Naive thymus-derived CD4-positive, alpha-beta T cell (primary cell): ENCODE measurements at regions of chr19 and their contacts with region 1.

Region 1: DNA sequence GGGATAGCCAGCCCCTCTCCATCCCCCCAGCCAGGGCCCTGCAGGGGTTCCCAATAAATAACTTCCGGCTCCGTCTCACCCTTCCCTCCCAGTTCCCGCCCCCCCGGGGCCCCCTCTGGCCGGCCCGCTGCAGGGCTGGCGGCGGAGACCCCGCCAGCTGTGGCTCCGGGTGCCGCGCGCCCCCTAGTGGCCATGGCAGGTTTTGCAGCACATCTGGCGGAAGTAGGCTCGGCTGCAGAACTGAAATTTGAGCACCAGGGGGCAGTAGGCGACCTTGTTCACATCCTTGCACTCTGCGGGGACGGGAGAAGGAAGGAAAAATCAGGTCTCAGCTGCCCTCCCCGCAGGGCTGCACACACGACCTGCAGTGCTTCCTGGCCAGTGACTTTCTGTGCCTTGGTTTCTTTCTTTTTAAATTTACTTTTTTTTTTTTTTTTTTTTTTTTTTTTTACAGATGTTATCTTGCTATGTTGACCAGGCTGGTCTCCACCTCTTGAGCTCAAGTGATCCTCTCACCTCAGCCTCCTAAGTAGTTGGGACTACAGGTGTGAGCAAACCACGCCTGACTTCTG is 3.6 kb upstream of the MYO1F start:
- DNase-seq: peak; percentile 73 to 94 (median 83)
- ATAC-seq: peak; percentile 91
- H3K4me3 ChIP-seq: no peak overlapping the region
- H3K4me3 Mint-ChIP-seq: peak overlapping the region in 2 of 10 donors; percentile 23 to 25
- H3K27ac ChIP-seq: no peak overlapping the region
- H3K27ac Mint-ChIP-seq: peak overlapping the region in 2 of 9 donors; percentile 38
- H3K4me1 ChIP-seq: peaks cover 29 to 45% of the 10 kb centered on the region in 2 donors
- H3K4me1 Mint-ChIP-seq: peaks cover 19 to 42% (median 32%) of the 10 kb centered on the region in 7 donors
- H3K27me3 ChIP-seq: no peaks in the 10 kb centered on the region
- H3K27me3 Mint-ChIP-seq: peaks cover 0 to 3% (median 0%) of the 10 kb centered on the region in 5 donors

Region 2: DNA sequence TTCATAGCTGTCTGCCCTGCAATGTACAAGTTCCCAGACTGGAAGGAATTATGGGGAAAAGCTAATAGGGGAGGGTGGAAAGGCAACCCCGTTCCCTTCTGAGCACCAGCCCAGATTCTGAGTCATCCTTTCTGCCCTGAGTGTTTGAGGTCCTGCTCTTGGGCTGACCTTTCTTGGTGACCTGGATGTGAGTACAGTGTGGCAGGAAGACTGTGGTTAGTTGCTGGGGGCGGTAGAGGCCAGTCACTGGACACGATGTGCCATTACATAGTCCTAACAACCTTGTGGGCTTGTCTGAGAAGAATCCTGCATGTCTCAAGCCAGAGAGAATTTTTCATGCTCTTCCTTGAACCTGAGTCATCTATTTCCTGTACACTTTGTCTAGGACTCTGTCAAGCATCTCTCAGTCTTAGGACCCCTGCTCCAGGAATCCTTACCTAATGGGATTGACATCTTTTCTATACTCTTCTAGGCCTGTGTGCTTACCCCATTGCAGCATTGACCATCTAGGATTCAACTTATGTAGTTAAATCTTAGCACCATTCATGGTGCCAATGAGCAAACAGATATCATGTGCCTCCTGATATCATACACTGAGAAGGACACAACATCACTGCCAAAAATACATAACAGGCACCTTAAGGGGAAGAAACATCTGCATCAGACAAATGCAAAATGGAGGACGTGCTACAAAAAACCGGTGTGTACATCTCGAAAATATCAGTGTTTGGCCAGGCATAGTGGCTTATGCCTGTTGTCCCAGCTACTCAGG is 225.0 kb before region 1 on chr19:
- CTCF ChIA-PET with region 1: interaction called, 18 read pairs
- POLR2A ChIA-PET with region 1: no interaction called
- intact Hi-C with region 1: loop called in 1 of 2 experiments (anchors 2 kb)
- DNase-seq: no peak
- ATAC-seq: peak; percentile 72
- H3K4me3 ChIP-seq: no peak overlapping the region
- H3K4me3 Mint-ChIP-seq: no peak overlapping the region
- H3K27ac ChIP-seq: no peak overlapping the region
- H3K27ac Mint-ChIP-seq: no peak overlapping the region
- H3K4me1 ChIP-seq: no peaks in the 10 kb centered on the region
- H3K4me1 Mint-ChIP-seq: peaks cover 0 to 17% (median 3%) of the 10 kb centered on the region in 7 donors
- H3K27me3 ChIP-seq: no peaks in the 10 kb centered on the region
- H3K27me3 Mint-ChIP-seq: peaks cover 1 to 18% (median 14%) of the 10 kb centered on the region in 5 donors

Region 3: GRCh38 chr19:8487137-8487851 is 93.5 kb before region 1 on chr19:
- CTCF ChIA-PET with region 1: interaction called, 84 read pairs
- POLR2A ChIA-PET with region 1: interaction called, 10 read pairs
- intact Hi-C with region 1: loop called in 1 of 2 experiments (anchors 1 kb)
- DNase-seq: peak; percentile 38 to 73 (median 59)
- ATAC-seq: peak; percentile 79
- H3K4me3 ChIP-seq: no peak overlapping the region
- H3K4me3 Mint-ChIP-seq: peak overlapping the region; percentile 33 to 85 (median 68)
- H3K27ac ChIP-seq: peak overlapping the region; percentile 48
- H3K27ac Mint-ChIP-seq: peak overlapping the region; percentile 82 to 95 (median 90)
- H3K4me1 ChIP-seq: peaks cover 15 to 26% of the 10 kb centered on the region in 2 donors
- H3K4me1 Mint-ChIP-seq: peaks cover 29 to 47% (median 34%) of the 10 kb centered on the region in 7 donors
- H3K27me3 ChIP-seq: no peaks in the 10 kb centered on the region
- H3K27me3 Mint-ChIP-seq: no peaks in the 10 kb centered on the region

Region 4: DNA sequence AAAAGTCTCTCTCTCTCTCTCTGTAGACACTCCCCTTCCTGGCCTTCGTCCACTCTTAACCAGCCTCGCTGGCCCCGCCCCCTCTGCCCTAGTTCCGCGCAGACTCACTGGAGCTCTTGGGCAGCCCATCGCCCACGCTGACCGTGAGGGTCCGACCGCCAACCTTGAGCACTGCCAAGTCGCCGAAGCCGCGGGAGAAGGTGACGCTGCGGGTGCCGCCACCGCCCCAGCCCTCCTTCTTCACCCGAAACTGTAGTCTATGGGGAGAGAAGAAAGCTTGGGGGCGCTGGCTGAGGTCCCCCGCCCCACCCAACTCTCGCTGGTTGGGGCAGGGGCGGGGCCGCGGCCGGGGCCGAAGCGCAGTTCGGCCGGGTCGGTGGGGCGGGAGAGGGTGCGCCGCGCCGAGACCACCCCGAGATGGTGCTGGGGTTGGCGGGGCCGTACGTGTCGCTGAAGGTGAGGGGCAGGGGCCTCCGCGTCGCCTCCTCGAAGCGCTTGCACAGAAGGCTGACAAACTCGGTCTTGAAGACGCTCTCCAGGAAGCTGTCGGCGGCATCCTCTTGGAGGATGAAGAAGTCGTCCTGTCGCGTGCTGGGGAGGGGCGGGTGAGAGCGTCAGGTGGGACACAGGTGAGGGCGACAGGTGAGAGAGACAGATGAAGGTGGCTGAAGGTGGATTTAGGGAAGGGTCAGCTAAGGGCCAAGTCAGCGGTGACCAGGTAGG is 54.3 kb before region 1 on chr19:
- CTCF ChIA-PET with region 1: interaction called, 35 read pairs
- POLR2A ChIA-PET with region 1: interaction called, 566 read pairs
- intact Hi-C with region 1: no loop called
- DNase-seq: no peak
- ATAC-seq: no peak
- H3K4me3 ChIP-seq: no peak overlapping the region
- H3K4me3 Mint-ChIP-seq: peak overlapping the region in 1 of 10 donors; percentile 47
- H3K27ac ChIP-seq: no peak overlapping the region
- H3K27ac Mint-ChIP-seq: peak overlapping the region in 6 of 9 donors; percentile 19 to 77 (median 58)
- H3K4me1 ChIP-seq: peaks cover 0 to 11% of the 10 kb centered on the region in 2 donors
- H3K4me1 Mint-ChIP-seq: peaks cover 9 to 26% (median 23%) of the 10 kb centered on the region in 7 donors
- H3K27me3 ChIP-seq: no peaks in the 10 kb centered on the region
- H3K27me3 Mint-ChIP-seq: no peaks in the 10 kb centered on the region

Region 5: GRCh38 chr19:8592231-8593009 is 11.6 kb after region 1 on chr19:
- CTCF ChIA-PET with region 1: interaction called, 7 read pairs
- POLR2A ChIA-PET with region 1: interaction called, 3 read pairs
- intact Hi-C with region 1: loop called in 1 of 2 experiments (anchors 1 kb)
- DNase-seq: peak; percentile 80 to 98 (median 96)
- ATAC-seq: peak; percentile 93
- H3K4me3 ChIP-seq: peak overlapping the region; percentile 81
- H3K4me3 Mint-ChIP-seq: peak overlapping the region; percentile 81 to 95 (median 88)
- H3K27ac ChIP-seq: peak overlapping the region; percentile 63
- H3K27ac Mint-ChIP-seq: peak overlapping the region; percentile 17 to 89 (median 76)
- H3K4me1 ChIP-seq: peaks cover 5 to 15% of the 10 kb centered on the region in 2 donors
- H3K4me1 Mint-ChIP-seq: peaks cover 6 to 37% (median 29%) of the 10 kb centered on the region in 7 donors
- H3K27me3 ChIP-seq: no peaks in the 10 kb centered on the region
- H3K27me3 Mint-ChIP-seq: peaks cover 0 to 29% (median 0%) of the 10 kb centered on the region in 5 donors

Region 6: GRCh38 chr19:8641908-8642547 is 61.2 kb after region 1 on chr19:
- CTCF ChIA-PET with region 1: interaction called, 37 read pairs
- POLR2A ChIA-PET with region 1: no interaction called
- intact Hi-C with region 1: loop called in 1 of 2 experiments (anchors 1 kb)
- DNase-seq: peak in 7 of 9 donors; percentile 28 to 67 (median 51)
- ATAC-seq: peak; percentile 56
- H3K4me3 ChIP-seq: no peak overlapping the region
- H3K4me3 Mint-ChIP-seq: peak overlapping the region in 1 of 10 donors; percentile 18
- H3K27ac ChIP-seq: no peak overlapping the region
- H3K27ac Mint-ChIP-seq: peak overlapping the region in 1 of 9 donors; percentile 62
- H3K4me1 ChIP-seq: no peaks in the 10 kb centered on the region
- H3K4me1 Mint-ChIP-seq: peaks cover 5 to 16% (median 7%) of the 10 kb centered on the region in 7 donors
- H3K27me3 ChIP-seq: no peaks in the 10 kb centered on the region
- H3K27me3 Mint-ChIP-seq: peaks cover 12 to 32% (median 15%) of the 10 kb centered on the region in 5 donors